Vagina (tissue), 2 donors: ENCODE measurements at regions of chr1 and their contacts with region 1.

Region 1: GRCh38 chr1:16023769-16024168 is 1.9 kb downstream of the CLCNKA start:
- DNase-seq: no peak
- H3K4me3 ChIP-seq: no peak overlapping the region
- H3K27ac ChIP-seq: no peak overlapping the region
- H3K4me1 ChIP-seq: peaks cover 20% of the 10 kb centered on the region
- H3K27me3 ChIP-seq: no peaks in the 10 kb centered on the region
- CTCF ChIP-seq: no peak
- POLR2A ChIP-seq: no peak

Region 2: GRCh38 chr1:15937706-15938168 is 86.0 kb before region 1 on chr1:
- intact Hi-C with region 1: no loop called
- DNase-seq: peak in 1 of 2 donors; percentile 81
- H3K4me3 ChIP-seq: no peak overlapping the region
- H3K27ac ChIP-seq: peak overlapping the region; percentile 13
- H3K4me1 ChIP-seq: no peaks in the 10 kb centered on the region
- H3K27me3 ChIP-seq: no peaks in the 10 kb centered on the region
- CTCF ChIP-seq: no peak
- POLR2A ChIP-seq: no peak

Region 3: GRCh38 chr1:16046842-16047241 is 23.1 kb after region 1 on chr1:
- intact Hi-C with region 1: loop called (anchors 2 kb)
- DNase-seq: no peak
- H3K4me3 ChIP-seq: no peak overlapping the region
- H3K27ac ChIP-seq: no peak overlapping the region
- H3K4me1 ChIP-seq: peaks cover 13% of the 10 kb centered on the region
- H3K27me3 ChIP-seq: no peaks in the 10 kb centered on the region
- CTCF ChIP-seq: no peak
- POLR2A ChIP-seq: no peak